ENCODE measurements at regions of chr4 and their contacts with region 1.

Region 1: GRCh38 chr4:139295206-139295941 is 5.9 kb upstream of the NAA15 start:
- DNase-seq: peak; percentile 92
- H3K4me3 Mint-ChIP-seq: peak overlapping the region; percentile 78
- H3K27ac Mint-ChIP-seq: peak overlapping the region; percentile 97
- H3K4me1 Mint-ChIP-seq: peaks cover 2% of the 10 kb centered on the region
- H3K27me3 Mint-ChIP-seq: no peaks in the 10 kb centered on the region
- CTCF ChIP-seq: peak; percentile 93

Region 2: DNA sequence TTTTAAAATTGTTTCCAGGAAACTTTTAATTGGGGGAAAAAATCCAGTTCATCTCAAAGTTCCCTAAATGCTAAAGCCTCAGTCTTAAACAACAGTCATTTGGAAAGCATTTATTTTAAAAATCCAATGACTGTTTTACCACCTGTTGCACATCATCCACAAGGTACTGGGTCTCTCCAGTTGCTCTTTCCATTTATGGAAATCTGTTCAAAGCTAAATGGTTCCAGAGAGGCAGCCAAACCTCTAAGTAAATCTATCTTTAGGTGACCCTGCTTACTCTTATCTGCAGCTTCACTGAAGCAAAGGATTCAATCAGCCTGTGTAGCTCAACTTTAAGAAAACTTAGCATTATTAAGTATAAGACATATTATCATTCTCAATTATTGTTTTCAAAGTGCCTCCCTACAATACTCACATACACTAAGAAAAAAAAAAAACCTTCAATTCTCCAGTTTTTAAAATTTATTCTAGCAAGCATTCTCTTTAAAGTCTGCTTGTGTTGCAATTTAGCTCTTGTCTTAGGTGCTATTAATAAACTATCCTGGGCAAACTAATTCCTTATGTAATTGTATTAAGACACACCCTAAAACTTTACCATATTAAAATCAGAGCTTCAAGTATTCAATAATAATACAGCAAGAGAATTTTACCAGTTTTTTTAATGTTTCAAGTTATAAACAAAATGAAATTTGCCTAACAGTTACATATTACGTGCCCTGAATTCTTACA is 219.2 kb before region 1 on chr4:
- CTCF ChIA-PET with region 1: no interaction called
- POLR2A ChIA-PET with region 1: interaction called, 92 read pairs
- intact Hi-C with region 1: loop called (anchors 5 kb)
- DNase-seq: no peak
- H3K4me3 Mint-ChIP-seq: no peak overlapping the region
- H3K27ac Mint-ChIP-seq: no peak overlapping the region
- H3K4me1 Mint-ChIP-seq: peaks cover 3% of the 10 kb centered on the region
- H3K27me3 Mint-ChIP-seq: no peaks in the 10 kb centered on the region
- CTCF ChIP-seq: no peak

Region 3: DNA sequence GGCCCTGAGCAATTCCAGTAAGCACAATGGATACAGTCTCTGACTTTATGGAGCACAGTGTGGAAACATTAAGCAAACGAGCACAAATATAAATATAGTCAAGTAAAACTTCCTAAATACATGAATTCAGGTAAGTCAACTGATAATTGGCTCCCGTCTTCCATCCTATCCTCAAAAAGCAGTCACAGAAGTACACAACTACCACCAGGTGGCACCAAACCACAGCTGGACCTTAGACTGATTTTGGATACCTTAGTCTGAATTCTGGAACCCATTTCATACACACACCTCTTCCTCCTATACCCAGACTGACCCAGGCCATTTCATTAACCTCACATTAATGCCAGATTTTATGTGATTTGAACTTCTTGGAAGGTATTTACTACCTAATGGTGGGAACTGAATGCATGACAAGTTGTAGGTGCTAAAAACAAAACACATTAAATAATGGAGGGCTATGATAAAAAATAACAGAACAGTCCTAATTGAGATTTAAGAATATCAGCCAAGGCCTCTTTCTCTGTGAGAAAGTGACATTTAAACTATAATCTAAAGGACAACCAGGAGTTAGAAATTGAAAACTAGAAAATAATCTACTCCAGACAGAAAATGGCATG is 195.9 kb before region 1 on chr4:
- CTCF ChIA-PET with region 1: interaction called, 13 read pairs
- POLR2A ChIA-PET with region 1: interaction called, 8 read pairs
- intact Hi-C with region 1: loop called (anchors 1 kb)
- DNase-seq: peak; percentile 92
- H3K4me3 Mint-ChIP-seq: no peak overlapping the region
- H3K27ac Mint-ChIP-seq: no peak overlapping the region
- H3K4me1 Mint-ChIP-seq: peaks cover 6% of the 10 kb centered on the region
- H3K27me3 Mint-ChIP-seq: no peaks in the 10 kb centered on the region
- CTCF ChIP-seq: peak; percentile 80

Region 4: DNA sequence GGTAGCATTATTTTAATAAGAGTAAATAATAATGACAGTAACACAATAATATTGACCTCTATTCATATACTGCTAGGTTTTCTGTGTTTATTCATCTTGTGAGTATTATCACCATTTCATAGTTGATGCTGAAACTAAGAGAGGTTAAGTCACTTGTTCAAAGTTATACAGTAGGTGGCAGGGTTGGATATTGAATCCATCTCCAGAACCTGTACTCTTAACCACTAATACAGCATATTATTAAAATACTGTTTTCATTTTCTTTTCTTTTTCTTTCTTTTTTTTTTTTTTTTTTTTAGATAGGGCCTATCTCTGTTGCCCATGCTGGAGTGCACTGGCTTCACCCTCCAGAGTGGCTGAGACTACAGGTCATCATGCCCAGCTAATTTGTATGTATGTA is 111.2 kb before region 1 on chr4:
- CTCF ChIA-PET with region 1: interaction called, 5 read pairs
- POLR2A ChIA-PET with region 1: interaction called, 254 read pairs
- intact Hi-C with region 1: loop called (anchors 1 kb)
- DNase-seq: peak; percentile 54
- H3K4me3 Mint-ChIP-seq: no peak overlapping the region
- H3K27ac Mint-ChIP-seq: no peak overlapping the region
- H3K4me1 Mint-ChIP-seq: no peaks in the 10 kb centered on the region
- H3K27me3 Mint-ChIP-seq: no peaks in the 10 kb centered on the region
- CTCF ChIP-seq: peak; percentile 24

Region 5: GRCh38 chr4:139243448-139244365 is 51.7 kb before region 1 on chr4:
- CTCF ChIA-PET with region 1: interaction called, 45 read pairs
- POLR2A ChIA-PET with region 1: interaction called, 91 read pairs
- intact Hi-C with region 1: loop called (anchors 1 kb)
- DNase-seq: peak; percentile 98
- H3K4me3 Mint-ChIP-seq: no peak overlapping the region
- H3K27ac Mint-ChIP-seq: peak overlapping the region; percentile 93
- H3K4me1 Mint-ChIP-seq: peaks cover 27% of the 10 kb centered on the region
- H3K27me3 Mint-ChIP-seq: no peaks in the 10 kb centered on the region
- CTCF ChIP-seq: no peak

Region 6: DNA sequence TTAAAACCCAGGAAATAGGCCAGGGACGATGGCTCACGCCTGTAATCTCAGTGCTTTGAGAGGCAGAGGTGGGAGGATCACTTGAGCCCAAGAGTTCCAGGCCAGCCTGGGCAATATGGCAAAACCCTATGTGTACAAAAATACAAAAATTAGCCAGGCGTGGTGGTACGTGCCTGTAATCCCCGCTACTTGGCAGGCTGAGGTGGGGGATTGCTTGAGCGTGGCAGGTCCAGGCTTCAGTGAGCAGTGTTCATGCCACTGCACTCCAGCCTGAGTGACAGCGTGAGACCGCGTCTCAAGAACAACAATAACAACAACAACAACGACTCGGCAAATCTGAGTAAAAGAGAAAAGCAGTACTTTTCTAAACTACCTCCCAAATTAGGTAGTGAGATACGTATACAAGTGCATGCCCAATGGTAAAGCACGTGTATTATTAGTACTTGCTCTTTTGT is 19.9 kb after region 1 on chr4:
- CTCF ChIA-PET with region 1: interaction called, 5 read pairs
- POLR2A ChIA-PET with region 1: interaction called, 56 read pairs
- intact Hi-C with region 1: no loop called
- DNase-seq: no peak
- H3K4me3 Mint-ChIP-seq: no peak overlapping the region
- H3K27ac Mint-ChIP-seq: peak overlapping the region; percentile 87
- H3K4me1 Mint-ChIP-seq: peaks cover 40% of the 10 kb centered on the region
- H3K27me3 Mint-ChIP-seq: no peaks in the 10 kb centered on the region
- CTCF ChIP-seq: no peak